ENCODE measurements at regions of chr3 and their contacts with region 1.

Region 1: GRCh38 chr3:53130179-53131061 is at the start of gene RFT1:
- H3K4me3 Mint-ChIP-seq: peak within 1 kb of the TSS; percentile 87
- H3K27ac Mint-ChIP-seq: peak within 1 kb of the TSS; percentile 83
- H3K4me1 Mint-ChIP-seq: peaks cover 37% of the 10 kb centered on the region
- H3K27me3 Mint-ChIP-seq: no peaks in the 10 kb centered on the region

Region 2: DNA sequence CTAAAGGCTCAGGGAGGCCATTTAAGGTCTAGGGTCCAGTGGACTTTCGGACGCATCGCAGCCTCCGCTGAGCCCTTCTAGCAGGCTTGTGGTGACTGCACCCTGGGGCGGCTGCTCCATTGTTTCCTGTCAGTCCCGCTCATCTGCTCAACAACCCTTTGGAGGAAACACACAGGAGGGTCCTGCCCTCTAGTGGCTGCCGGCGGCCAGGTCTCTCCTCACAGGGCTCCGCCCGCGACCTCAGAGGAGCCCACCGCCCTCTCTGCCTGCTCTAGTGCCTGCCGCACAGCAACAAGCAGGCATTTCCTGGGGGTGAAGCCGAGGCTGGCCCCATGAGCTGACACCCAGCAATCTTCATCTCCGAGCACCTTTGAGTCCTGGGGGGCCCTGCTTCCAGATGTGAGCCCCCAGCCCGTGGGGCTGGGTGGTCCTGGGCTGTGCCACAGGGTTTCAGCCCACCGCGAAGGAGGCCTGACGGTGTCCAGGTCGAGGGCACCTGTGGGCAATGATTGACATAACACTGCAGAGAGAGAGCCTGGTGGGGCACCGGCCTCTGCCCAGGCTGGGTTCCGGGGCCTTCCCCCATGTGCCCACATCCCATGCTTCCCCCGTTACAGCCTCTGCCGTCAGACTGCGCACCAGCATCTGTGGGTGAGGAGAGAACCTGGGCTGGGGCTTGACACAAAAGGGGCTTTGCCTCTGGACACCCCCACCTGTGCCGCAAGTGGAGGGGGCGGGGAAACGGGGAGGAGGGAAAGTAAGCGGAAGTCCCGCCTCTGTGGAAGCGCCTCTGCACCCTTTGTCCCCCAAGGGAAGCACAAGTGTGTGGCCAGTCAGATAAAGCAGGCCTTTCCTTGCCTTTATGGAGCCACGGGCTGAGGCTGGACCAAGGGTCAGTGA is 57.5 kb before region 1 on chr3:
- intact Hi-C with region 1: no loop called
- H3K4me3 Mint-ChIP-seq: peak overlapping the region; percentile 86
- H3K27ac Mint-ChIP-seq: peak overlapping the region; percentile 88
- H3K4me1 Mint-ChIP-seq: peaks cover 23% of the 10 kb centered on the region
- H3K27me3 Mint-ChIP-seq: peaks cover 3% of the 10 kb centered on the region

Region 3: DNA sequence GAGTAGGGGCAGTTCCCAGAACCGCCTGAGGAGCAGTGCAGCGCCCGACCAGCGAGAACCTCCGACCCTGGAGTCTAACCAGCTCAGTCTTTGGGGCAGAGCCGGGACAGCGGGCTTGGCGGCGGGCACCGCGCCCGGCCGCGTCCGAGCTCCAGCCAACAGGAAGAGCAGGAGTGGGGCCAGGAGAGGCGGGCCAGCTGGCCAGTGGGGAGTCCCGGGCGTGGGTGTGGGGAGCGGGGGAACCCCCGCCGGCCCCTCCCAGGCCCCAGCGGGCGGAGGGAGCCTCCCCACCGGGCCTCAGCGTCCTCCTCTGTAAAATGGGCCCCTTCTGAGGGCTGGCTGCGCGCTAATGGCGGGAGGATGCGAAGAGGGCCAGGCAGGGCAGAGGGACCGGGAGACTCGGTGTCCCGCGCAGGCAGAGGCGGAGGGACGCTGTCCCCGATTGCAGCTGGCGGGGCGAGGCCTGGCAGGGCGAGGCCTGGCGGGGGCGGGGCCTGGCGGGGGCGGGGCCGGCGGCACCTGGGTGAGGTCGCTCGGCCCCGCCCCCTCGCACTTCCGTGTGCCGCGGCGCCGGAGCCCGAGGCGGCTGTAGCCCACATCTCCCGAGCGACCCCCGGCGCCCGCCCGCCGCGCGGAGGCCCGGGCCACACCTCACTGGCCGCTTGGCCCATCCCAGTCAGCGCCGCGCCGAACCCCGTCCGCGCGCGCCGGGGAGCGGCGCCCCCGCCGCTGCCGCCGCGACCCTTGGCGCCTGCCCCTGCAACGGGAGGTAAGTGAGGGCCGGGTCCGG is 30.4 kb after region 1 on chr3 and contains the start of gene PRKCD:
- intact Hi-C with region 1: loop called (anchors 2 kb)
- H3K4me3 Mint-ChIP-seq: peak within 1 kb of the TSS; percentile 82
- H3K27ac Mint-ChIP-seq: peak within 1 kb of the TSS; percentile 98
- H3K4me1 Mint-ChIP-seq: peaks cover 82% of the 10 kb centered on the region
- H3K27me3 Mint-ChIP-seq: peaks cover 17% of the 10 kb centered on the region

Region 4: GRCh38 chr3:53180305-53181023 is 50.0 kb after region 1 on chr3:
- intact Hi-C with region 1: loop called (anchors 5 kb)
- H3K4me3 Mint-ChIP-seq: peak overlapping the region; percentile 46
- H3K27ac Mint-ChIP-seq: peak overlapping the region; percentile 28
- H3K4me1 Mint-ChIP-seq: peaks cover 83% of the 10 kb centered on the region
- H3K27me3 Mint-ChIP-seq: no peaks in the 10 kb centered on the region

Measured in dendritic cell treated with granulocyte-macrophage colony-stimulating factor and Interleukin-4, amounts not matched to agents 40 ng/mL and 50 ng/mL, for 4 days (primary cell).